ENCODE measurements at regions of chr6 and their contacts with region 1.

Region 1: GRCh38 chr6:32195652-32195901 is 3.1 kb upstream of the GPSM3 start:
- DNase-seq: peak; percentile 100
- ATAC-seq: peak; percentile 90
- H3K4me3 Mint-ChIP-seq: peak overlapping the region; percentile 94
- H3K27ac Mint-ChIP-seq: peak overlapping the region; percentile 90
- H3K4me1 Mint-ChIP-seq: peaks cover 32% of the 10 kb centered on the region
- H3K27me3 Mint-ChIP-seq: no peaks in the 10 kb centered on the region

Region 2: DNA sequence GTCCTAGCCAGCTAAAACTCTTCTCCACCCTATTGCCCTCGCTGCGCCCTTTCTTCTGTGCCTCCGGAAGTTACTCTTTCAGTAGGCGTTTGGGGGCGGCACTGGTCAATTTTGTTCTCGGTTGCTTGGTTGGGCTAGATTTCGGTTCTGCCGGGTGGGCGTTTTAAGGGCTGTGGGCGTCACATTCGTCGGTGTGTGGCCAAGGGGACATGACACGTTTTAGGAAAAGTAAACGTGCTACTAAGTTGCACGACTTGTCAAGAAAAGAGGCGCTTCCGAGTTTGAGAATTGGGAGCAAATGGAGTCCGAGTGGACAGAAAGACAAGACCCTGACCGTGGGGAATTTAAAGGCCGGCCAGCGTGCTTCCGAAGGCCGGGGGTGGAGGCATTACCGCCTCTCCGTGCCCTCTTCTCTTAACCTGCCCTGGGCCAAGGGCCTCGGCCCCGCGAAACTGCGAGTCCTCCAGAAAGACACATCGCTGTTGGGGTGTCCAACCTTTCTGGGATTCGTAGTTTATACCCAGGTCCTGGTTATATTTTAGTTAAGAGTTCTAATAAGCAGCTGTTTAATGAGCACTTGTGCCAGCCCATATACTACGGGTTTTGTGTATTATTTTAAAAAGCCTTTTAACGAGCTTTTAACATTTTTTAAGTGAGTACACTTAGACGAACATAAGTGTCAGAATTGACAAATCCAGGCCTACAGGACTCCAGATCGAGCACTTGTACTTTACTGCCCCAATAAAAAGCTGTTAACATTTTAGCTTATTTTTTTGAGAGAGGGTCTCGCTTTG is 542.5 kb before region 1 on chr6:
- CTCF ChIA-PET with region 1: interaction called, 3 read pairs
- POLR2A ChIA-PET with region 1: no interaction called
- intact Hi-C with region 1: loop called in 1 of 2 experiments (anchors 5 kb)
- DNase-seq: peak; percentile 91
- ATAC-seq: peak; percentile 71
- H3K4me3 Mint-ChIP-seq: peak overlapping the region; percentile 88
- H3K27ac Mint-ChIP-seq: peak overlapping the region; percentile 96
- H3K4me1 Mint-ChIP-seq: peaks cover 38% of the 10 kb centered on the region
- H3K27me3 Mint-ChIP-seq: no peaks in the 10 kb centered on the region

Region 3: GRCh38 chr6:31901953-31902643 is 293.5 kb before region 1 on chr6 and contains the start of gene ZBTB12:
- CTCF ChIA-PET with region 1: no interaction called
- POLR2A ChIA-PET with region 1: no interaction called
- intact Hi-C with region 1: loop called in 1 of 2 experiments (anchors 2 kb)
- DNase-seq: peak; percentile 92
- ATAC-seq: peak; percentile 63
- H3K4me3 Mint-ChIP-seq: peak within 1 kb of the TSS; percentile 69
- H3K27ac Mint-ChIP-seq: peak within 1 kb of the TSS; percentile 78
- H3K4me1 Mint-ChIP-seq: peaks cover 25% of the 10 kb centered on the region
- H3K27me3 Mint-ChIP-seq: no peaks in the 10 kb centered on the region
- total RNA-seq, gene ZBTB12: 1.9 to 2.4 TPM

Region 4: GRCh38 chr6:32127717-32128592 is 67.6 kb before region 1 on chr6 and contains the start of gene ATF6B:
- CTCF ChIA-PET with region 1: interaction called, 7 read pairs
- POLR2A ChIA-PET with region 1: interaction called, 4 read pairs
- intact Hi-C with region 1: loop called (anchors 1 kb)
- DNase-seq: peak; percentile 99
- ATAC-seq: peak; percentile 91
- H3K4me3 Mint-ChIP-seq: peak within 1 kb of the TSS; percentile 99
- H3K27ac Mint-ChIP-seq: peak within 1 kb of the TSS; percentile 98
- H3K4me1 Mint-ChIP-seq: peaks cover 39% of the 10 kb centered on the region
- H3K27me3 Mint-ChIP-seq: no peaks in the 10 kb centered on the region
- total RNA-seq, gene ATF6B: 60.2 to 63.4 TPM

Region 5: GRCh38 chr6:32177788-32178546 is 17.6 kb before region 1 on chr6 and contains the start of gene RNF5:
- CTCF ChIA-PET with region 1: interaction called, 5 read pairs
- POLR2A ChIA-PET with region 1: interaction called, 9 read pairs
- intact Hi-C with region 1: loop called (anchors 1 kb)
- DNase-seq: peak; percentile 96
- ATAC-seq: peak; percentile 89
- H3K4me3 Mint-ChIP-seq: peak within 1 kb of the TSS; percentile 92
- H3K27ac Mint-ChIP-seq: peak within 1 kb of the TSS; percentile 98
- H3K4me1 Mint-ChIP-seq: peaks cover 70% of the 10 kb centered on the region
- H3K27me3 Mint-ChIP-seq: no peaks in the 10 kb centered on the region
- total RNA-seq, gene RNF5: 51.7 to 65.6 TPM

Region 6: DNA sequence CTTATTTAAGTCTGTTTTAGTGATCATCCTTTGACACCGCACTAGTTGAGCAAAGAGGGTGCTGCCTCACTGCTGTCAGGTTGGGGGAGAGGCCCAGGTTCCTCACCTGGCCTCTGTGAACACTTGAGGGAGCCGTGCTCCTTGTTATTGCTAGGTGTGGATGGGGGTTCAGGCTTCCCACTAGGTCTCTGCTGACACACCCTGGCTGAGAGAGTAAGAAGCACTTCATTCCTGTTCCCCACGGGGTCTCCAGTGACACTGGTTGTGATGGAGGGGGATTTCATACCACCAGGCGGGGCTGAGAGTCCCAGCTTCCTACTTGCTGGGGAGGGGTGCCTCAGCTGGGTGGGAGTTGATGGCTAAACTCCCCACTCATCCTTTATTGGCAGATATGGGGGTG is 39.4 kb after region 1 on chr6:
- CTCF ChIA-PET with region 1: no interaction called
- POLR2A ChIA-PET with region 1: no interaction called
- intact Hi-C with region 1: no loop called
- DNase-seq: peak; percentile 29
- ATAC-seq: peak; percentile 64
- H3K4me3 Mint-ChIP-seq: no peak overlapping the region
- H3K27ac Mint-ChIP-seq: no peak overlapping the region
- H3K4me1 Mint-ChIP-seq: peaks cover 5% of the 10 kb centered on the region
- H3K27me3 Mint-ChIP-seq: no peaks in the 10 kb centered on the region

Region 7: DNA sequence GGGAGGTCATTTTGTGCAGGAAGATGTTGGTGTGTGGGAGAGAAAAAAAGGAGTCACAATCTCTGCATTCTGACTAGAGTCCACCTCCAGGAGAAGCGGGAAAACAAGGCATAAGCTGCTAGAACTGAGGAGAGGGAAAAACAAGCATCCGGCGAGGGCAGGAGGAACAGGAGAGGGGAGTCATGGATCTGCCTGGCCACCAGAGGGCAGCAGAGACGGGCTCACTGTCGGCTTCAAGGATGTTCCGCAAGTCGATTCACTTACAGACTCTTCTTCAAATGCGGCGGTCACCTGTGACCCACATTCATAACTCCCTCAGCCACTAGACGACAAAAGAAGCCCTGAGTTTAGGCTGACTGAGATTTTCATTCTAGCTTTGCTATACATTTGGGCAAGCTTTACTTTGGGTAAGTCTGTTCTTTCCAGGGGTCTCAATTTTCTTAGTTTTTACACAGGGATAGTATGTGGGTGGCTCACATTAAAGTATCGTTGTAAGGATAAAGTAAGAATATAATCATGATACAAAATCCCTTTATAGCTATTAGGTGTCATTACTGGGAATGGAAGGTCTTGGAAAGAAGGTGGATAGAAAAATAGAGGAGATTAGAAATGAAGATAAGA is 218.0 kb after region 1 on chr6:
- CTCF ChIA-PET with region 1: no interaction called
- POLR2A ChIA-PET with region 1: no interaction called
- intact Hi-C with region 1: no loop called
- DNase-seq: peak; percentile 93
- ATAC-seq: peak; percentile 93
- H3K4me3 Mint-ChIP-seq: no peak overlapping the region
- H3K27ac Mint-ChIP-seq: no peak overlapping the region
- H3K4me1 Mint-ChIP-seq: peaks cover 5% of the 10 kb centered on the region
- H3K27me3 Mint-ChIP-seq: peaks cover 39% of the 10 kb centered on the region

Region 8: DNA sequence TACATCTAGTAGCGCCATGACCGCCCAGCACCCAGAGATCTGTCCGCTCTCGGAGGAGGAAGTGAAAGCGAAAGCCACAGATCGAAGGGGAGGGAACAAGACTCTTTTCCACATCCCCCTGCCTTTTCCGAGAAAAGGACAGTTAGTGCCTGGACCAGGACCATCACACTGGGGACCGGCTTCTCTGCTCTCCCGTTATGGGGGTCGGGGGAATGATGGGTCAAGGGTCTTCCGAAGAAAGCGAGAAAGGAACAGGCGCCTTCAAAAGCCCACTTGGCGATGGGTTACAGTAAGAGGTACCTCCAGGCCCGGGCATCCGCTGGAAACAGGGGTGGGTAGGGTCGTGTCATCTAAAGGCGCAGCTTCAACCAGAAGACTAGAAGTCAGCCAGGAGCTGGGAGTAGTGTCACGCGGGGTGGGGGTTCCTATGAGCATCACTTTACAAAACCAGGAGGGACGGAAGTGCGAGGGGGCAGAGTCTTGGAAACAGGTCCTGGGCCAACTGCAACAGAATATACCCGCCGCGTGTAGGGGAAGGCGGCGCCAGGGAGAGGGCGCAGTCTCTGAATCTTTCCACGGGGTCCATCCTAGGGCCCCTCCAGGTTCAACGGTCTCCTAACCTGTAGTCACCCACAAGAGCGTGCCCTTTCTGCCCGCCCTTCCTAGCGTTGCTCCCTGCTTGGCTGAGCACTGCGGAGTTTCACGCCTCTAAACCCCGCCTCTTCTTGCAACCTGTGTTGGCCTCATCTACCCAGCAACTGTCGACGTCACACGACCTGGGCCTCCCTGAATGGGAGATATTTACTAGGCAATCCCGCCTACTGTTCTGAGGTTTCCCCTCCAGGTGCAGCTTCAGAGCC is 648.6 kb after region 1 on chr6 and contains the start of gene PSMB8:
- CTCF ChIA-PET with region 1: interaction called, 3 read pairs
- POLR2A ChIA-PET with region 1: no interaction called
- intact Hi-C with region 1: loop called in 1 of 2 experiments (anchors 1 kb)
- DNase-seq: peak; percentile 99
- ATAC-seq: peak; percentile 73
- H3K4me3 Mint-ChIP-seq: peak within 1 kb of the TSS; percentile 95
- H3K27ac Mint-ChIP-seq: peak within 1 kb of the TSS; percentile 97
- H3K4me1 Mint-ChIP-seq: peaks cover 66% of the 10 kb centered on the region
- H3K27me3 Mint-ChIP-seq: no peaks in the 10 kb centered on the region
- total RNA-seq, gene PSMB8: 238 to 338 TPM

Region 9: DNA sequence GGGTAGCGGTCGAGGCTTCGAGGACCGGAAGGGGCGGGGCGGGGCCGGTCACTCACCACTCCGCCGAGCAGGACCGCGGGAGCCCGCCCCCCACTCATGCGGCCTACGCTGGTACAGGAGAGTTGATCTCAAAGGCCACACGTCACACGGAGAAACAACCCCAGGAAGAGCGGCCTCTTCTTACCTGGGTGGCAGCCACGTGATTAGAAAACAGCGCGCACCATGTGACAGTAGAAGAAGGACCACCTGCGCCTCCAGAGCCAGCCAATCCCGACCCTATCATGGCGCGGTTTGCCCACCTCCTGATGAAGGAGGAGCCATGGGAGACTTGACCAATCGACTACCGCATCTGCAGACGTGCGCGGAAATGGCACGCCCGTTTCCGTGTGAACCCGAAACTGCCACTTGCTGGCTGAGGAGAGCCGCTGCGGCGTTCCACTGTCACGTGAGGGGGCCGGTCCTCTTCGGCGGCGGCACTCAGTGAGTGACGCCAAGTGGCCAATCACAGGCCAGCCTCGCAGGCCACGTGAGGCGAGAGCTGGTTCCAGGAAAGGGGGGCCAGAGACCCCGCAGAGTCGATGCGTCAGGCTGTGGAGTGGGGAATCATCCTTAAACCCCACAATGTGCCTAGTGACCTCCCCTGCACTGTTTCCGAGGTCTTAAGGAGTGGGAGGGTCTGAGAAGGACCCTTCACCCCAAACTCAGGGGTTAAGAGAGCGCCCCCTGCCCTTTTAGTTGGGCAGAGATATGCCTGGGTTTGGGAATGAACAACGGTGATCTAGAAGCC is 1222.5 kb after region 1 on chr6 and contains the start of gene CUTA:
- CTCF ChIA-PET with region 1: no interaction called
- POLR2A ChIA-PET with region 1: no interaction called
- intact Hi-C with region 1: loop called in 1 of 2 experiments (anchors 10 kb)
- DNase-seq: peak; percentile 100
- ATAC-seq: peak; percentile 87
- H3K4me3 Mint-ChIP-seq: peak within 1 kb of the TSS; percentile 96
- H3K27ac Mint-ChIP-seq: peak within 1 kb of the TSS; percentile 98
- H3K4me1 Mint-ChIP-seq: peaks cover 54% of the 10 kb centered on the region
- H3K27me3 Mint-ChIP-seq: no peaks in the 10 kb centered on the region
- total RNA-seq, gene CUTA: 154 to 188 TPM